ENCODE measurements at regions of chr5 and their contacts with region 1.

Region 1: DNA sequence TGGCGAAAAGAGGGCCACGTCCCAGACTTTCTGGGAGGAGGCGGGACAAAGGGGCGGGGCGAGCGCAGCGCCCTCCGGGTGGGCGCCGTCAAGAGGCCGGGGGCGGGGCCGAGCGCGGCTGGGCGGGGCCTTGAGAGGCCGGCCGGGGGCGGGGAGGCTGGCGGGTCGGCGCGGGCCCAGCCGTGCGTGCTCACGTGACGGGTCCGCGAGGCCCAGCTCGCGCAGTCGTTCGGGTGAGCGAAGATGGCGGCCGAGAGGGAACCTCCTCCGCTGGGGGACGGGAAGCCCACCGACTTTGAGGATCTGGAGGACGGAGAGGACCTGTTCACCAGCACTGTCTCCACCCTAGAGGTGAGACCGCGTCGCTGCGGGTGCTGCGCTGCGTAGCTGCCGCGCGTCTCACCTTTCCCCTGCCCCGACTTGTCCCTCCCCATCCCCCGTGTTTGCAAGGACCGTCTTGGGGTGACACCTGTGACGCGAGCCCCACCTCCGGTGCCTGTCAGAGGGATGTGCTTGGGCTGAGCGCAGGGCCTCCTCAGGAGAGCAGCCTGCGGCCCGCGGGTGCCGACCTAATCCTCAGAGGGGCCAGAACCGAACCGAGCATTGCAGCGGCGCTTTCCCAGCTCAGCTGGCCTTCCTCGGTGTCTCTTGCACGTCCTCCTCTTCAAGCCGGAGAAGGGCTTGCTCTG is at the start of gene SNX2:
- DNase-seq: peak; percentile 96
- H3K4me3 ChIP-seq: peak within 1 kb of the TSS; percentile 68 to 94 (median 86)
- H3K27ac ChIP-seq: peak within 1 kb of the TSS; percentile 80 to 94 (median 88)
- H3K4me1 ChIP-seq: peaks cover 0 to 34% (median 19%) of the 10 kb centered on the region in 4 donors
- H3K27me3 ChIP-seq: no peaks in the 10 kb centered on the region
- CTCF ChIP-seq: peak in 1 of 4 experiments; percentile 20
- EP300 ChIP-seq: no peak
- POLR2A ChIP-seq: peak; percentile 61 to 65
- total RNA-seq, gene SNX2: 50.2 to 111 (median 82.3) TPM

Region 2: DNA sequence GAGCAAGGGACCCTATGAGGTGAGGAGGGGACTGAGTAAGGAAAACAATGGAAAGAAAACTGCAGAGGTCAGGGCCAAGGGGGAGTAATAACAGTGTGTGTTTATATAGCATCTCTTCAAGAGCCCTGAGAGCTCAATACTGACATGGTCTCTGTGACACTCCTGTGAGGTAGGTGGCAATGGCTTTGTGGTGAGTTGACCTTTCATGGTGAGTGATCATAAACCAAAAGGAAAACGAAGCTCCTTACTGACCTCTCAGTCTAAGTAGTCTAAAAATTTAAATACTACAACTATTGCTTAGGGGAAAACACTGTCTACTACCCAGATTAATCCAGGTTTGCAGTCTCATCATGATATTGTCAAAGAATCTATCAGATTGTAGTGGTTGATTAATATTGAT is 332.1 kb before region 1 on chr5:
- intact Hi-C with region 1: no loop called
- DNase-seq: no peak
- H3K4me3 ChIP-seq: no peak overlapping the region
- H3K27ac ChIP-seq: no peak overlapping the region
- H3K4me1 ChIP-seq: no peaks in the 10 kb centered on the region
- H3K27me3 ChIP-seq: no peaks in the 10 kb centered on the region
- CTCF ChIP-seq: no peak
- EP300 ChIP-seq: no peak
- POLR2A ChIP-seq: no peak

Region 3: GRCh38 chr5:122845229-122846050 is 70.4 kb after region 1 on chr5 and contains the start of gene SNX24:
- intact Hi-C with region 1: loop called (anchors 2 kb)
- DNase-seq: peak; percentile 86
- H3K4me3 ChIP-seq: peak within 1 kb of the TSS; percentile 87 to 99 (median 97)
- H3K27ac ChIP-seq: peak within 1 kb of the TSS; percentile 91 to 97 (median 96)
- H3K4me1 ChIP-seq: peaks cover 0 to 31% (median 20%) of the 10 kb centered on the region in 4 donors
- H3K27me3 ChIP-seq: no peaks in the 10 kb centered on the region
- CTCF ChIP-seq: no peak
- EP300 ChIP-seq: no peak
- POLR2A ChIP-seq: no peak
- total RNA-seq, gene SNX24: 8.2 to 21.0 (median 10.6) TPM

Measured in sigmoid colon (tissue), 7 donors.